ENCODE measurements at regions of chr4 and their contacts with region 1.

Region 1: GRCh38 chr4:2489841-2490552 is 21.1 kb downstream of the RNF4 start:
- DNase-seq: no peak
- H3K4me3 ChIP-seq: no peak overlapping the region
- H3K27ac ChIP-seq: no peak overlapping the region
- H3K4me1 ChIP-seq: peaks cover 0 to 35% (median 11%) of the 10 kb centered on the region in 4 donors
- H3K27me3 ChIP-seq: no peaks in the 10 kb centered on the region
- CTCF ChIP-seq: no peak

Region 2: GRCh38 chr4:1792832-1793495 is 697.0 kb before region 1 on chr4 and contains the start of gene FGFR3:
- intact Hi-C with region 1: loop called (anchors 5 kb)
- DNase-seq: no peak
- H3K4me3 ChIP-seq: peak within 1 kb of the TSS; percentile 44 to 58
- H3K27ac ChIP-seq: no peak within 1 kb of the TSS
- H3K4me1 ChIP-seq: peaks cover 0 to 29% (median 19%) of the 10 kb centered on the region in 4 donors
- H3K27me3 ChIP-seq: peaks cover 0 to 66% of the 10 kb centered on the region in 2 donors
- CTCF ChIP-seq: no peak

Measured in tibial artery (tissue), 4 donors.